Dorsolateral prefrontal cortex (tissue), 120 donors: ENCODE measurements at regions of chr7 and their contacts with region 1.

Region 1: GRCh38 chr7:152383341-152384234 is 52.2 kb downstream of the KMT2C start:
- DNase-seq: no peak
- H3K4me3 ChIP-seq: no peak overlapping the region
- H3K27ac ChIP-seq: no peak overlapping the region
- H3K27me3 ChIP-seq: no peaks in the 10 kb centered on the region
- CTCF ChIP-seq: no peak

Region 2: DNA sequence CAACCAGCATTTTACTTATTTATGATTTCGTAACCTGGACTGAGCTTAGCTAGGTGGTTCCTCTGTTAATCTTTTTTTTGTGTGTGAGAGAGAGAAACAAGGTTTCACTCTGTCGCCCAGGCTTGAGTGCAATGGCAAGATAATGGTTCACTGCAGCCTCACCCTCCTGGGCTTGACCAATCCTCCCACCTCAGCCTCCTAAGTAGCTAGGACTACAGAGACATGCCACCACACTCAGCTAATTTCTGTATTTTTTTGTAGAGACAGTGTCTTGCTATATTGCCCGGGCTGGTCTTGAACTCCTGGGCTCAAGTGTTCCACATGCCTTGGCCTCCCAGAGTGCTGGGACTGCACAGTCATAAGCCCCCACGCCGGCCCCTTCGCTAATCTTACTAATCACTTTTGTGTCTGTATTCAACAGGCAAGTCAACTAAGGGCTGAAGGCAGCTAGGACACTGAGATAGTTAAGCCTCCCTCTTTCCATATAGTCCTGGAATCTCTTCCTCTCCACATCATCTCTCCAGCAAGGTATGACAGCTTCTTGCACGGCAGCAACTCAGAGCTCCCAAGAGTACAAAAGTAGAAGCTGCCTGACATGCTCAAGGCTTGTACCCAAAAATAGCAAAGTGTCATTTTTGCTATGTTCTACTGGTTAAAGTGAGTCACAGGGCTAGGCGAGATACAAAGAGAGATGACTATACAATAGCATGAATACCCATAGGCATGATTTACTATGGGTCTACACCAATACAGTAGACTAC is 40.9 kb after region 1 on chr7:
- intact Hi-C with region 1: loop called in 1 of 2 experiments (anchors 5 kb)
- DNase-seq: no peak
- H3K4me3 ChIP-seq: no peak overlapping the region
- H3K27ac ChIP-seq: no peak overlapping the region
- H3K27me3 ChIP-seq: no peaks in the 10 kb centered on the region
- CTCF ChIP-seq: no peak